ENCODE measurements at regions of chr20 and their contacts with region 1.

Region 1: GRCh38 chr20:61464307-61465303 is 212.5 kb downstream of the CDH4 start:
- DNase-seq: no peak
- ATAC-seq: no peak
- H3K4me3 ChIP-seq: no peak overlapping the region
- H3K27ac ChIP-seq: no peak overlapping the region
- H3K4me1 ChIP-seq: no peaks in the 10 kb centered on the region
- H3K27me3 ChIP-seq: peaks cover 0 to 3% (median 0%) of the 10 kb centered on the region in 9 donors
- CTCF ChIP-seq: no peak
- POLR2A ChIP-seq: no peak

Region 2: DNA sequence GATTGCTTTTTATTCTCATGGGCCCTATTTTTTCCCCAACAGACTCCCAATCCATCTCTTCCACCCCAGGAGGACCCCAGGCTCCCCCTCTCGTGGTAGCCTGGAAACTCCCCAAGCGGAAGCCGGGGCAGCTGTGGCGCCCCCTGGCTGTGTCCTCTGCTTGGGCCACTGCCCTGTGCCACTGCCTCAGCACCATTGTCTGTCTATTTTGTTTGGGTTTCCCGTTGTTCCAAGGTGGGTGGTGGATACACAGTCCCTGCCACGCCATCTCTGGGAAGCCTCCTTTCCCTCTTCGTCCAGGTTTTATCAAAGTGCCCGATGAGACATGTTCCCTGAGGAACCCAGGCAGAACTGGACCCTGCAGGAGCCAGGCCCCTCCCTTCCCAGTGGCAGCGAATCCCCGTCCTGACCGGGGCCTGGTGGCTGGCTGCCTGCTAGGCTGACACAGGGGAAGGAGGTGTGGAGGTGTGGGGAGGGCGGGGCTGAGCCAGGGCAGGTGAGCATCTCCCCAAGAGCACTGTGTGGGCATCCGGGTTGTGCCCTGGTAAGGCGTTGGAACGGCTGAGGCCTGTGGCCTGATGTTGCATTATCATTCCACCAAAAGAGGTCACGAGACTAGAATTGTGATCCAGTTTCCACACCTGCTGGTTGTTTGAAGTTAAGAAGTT is 15.7 kb after region 1 on chr20:
- intact Hi-C with region 1: loop called in 1 of 10 experiments (anchors 1 kb)
- DNase-seq: no peak
- ATAC-seq: no peak
- H3K4me3 ChIP-seq: no peak overlapping the region
- H3K27ac ChIP-seq: no peak overlapping the region
- H3K4me1 ChIP-seq: no peaks in the 10 kb centered on the region
- H3K27me3 ChIP-seq: peaks cover 0 to 23% (median 0%) of the 10 kb centered on the region in 9 donors
- CTCF ChIP-seq: no peak
- POLR2A ChIP-seq: no peak

Measured in heart left ventricle (tissue), 16 donors.